K562 (cell line): ENCODE measurements at regions of chr16 and their contacts with region 1.

Region 1: GRCh38 chr16:70576431-70577255 is 53.0 kb downstream of the SF3B3 start:
- DNase-seq: peak in 1 of 4 experiments; percentile 25
- ATAC-seq: peak; percentile 31
- H3K4me3 ChIP-seq: no peak overlapping the region
- H3K27ac ChIP-seq: peak overlapping the region; percentile 22; the same call in 1 of the 3 replicates
- H3K4me1 ChIP-seq: peaks cover 5 to 8% of the 10 kb centered on the region in 2 experiments; a peak in 3 of 5 replicates
- H3K27me3 ChIP-seq: no peaks in the 10 kb centered on the region
- CTCF ChIP-seq: no peak
- EP300 ChIP-seq: no peak
- POLR2A ChIP-seq: peak; percentile 82
- RAD21 ChIP-seq: no peak

Region 2: GRCh38 chr16:70304892-70305448 is 271.7 kb before region 1 on chr16:
- CTCF ChIA-PET with region 1: no interaction called
- POLR2A ChIA-PET with region 1: no interaction called
- in situ Hi-C with region 1: no loop called
- intact Hi-C with region 1: no loop called
- DNase-seq: no peak
- ATAC-seq: no peak
- H3K4me3 ChIP-seq: no peak overlapping the region
- H3K27ac ChIP-seq: no peak overlapping the region
- H3K4me1 ChIP-seq: no peaks in the 10 kb centered on the region
- H3K27me3 ChIP-seq: no peaks in the 10 kb centered on the region
- CTCF ChIP-seq: no peak
- EP300 ChIP-seq: no peak
- POLR2A ChIP-seq: no peak
- RAD21 ChIP-seq: no peak

Region 3: GRCh38 chr16:70534971-70535370 is 41.7 kb before region 1 on chr16:
- CTCF ChIA-PET with region 1: no interaction called
- POLR2A ChIA-PET with region 1: no interaction called
- in situ Hi-C with region 1: no loop called
- intact Hi-C with region 1: loop called (anchors 5 kb)
- DNase-seq: peak; percentile 27 to 32 (median 28)
- ATAC-seq: peak; percentile 59
- H3K4me3 ChIP-seq: no peak overlapping the region
- H3K27ac ChIP-seq: no peak overlapping the region
- H3K4me1 ChIP-seq: peaks cover 0 to 4% of the 10 kb centered on the region in 2 experiments; a peak in 1 of 5 replicates
- H3K27me3 ChIP-seq: no peaks in the 10 kb centered on the region
- CTCF ChIP-seq: no peak
- EP300 ChIP-seq: no peak
- POLR2A ChIP-seq: no peak
- RAD21 ChIP-seq: no peak

Region 4: DNA sequence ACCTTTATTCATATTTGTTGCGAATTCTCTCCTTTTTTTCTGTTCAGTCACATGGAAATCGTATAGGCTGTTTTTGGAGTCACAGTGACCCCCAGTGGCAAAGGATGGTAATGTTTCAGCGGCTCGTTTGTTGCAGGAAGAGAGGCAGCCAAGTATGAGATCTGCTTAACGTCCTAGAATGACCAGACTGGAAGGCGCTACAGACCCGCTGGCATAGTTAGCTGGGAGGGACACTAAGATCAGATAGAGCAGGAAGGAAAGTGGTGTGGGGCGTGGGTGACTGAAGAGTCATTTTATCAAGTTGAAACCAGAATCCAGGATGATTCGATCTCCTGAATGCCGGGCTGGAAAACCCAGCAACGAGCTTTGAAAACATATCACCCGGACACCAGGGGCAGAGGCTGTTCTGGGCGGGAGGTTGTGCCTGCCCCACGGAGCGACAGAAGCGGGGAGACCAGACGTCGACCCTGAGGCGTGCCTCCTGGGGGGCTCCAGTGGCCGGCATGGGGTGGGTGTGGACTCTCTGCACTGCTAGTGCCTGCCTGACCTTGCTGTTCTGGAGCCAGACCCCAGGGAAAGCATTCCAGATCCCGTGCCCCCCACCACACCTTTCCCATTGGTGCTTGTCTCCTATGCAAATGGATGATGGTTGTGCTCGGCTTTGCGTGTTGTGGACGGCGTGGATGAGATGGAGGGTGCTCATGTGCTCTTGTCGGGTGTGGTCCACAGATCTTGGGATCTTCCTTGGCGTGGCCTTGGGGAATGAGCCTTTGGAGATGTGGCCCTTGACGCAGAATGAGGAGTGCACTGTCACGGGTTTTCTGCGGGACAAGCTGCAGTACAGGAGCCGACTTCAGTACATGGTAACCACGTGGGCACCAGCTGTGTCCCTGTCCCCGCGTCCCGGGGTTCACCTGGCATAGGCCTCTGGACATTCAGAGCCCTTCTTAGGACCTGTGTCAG is 77.4 kb after region 1 on chr16:
- CTCF ChIA-PET with region 1: interaction called, 5 read pairs
- POLR2A ChIA-PET with region 1: no interaction called
- in situ Hi-C with region 1: no loop called
- intact Hi-C with region 1: loop called (anchors 5 kb)
- DNase-seq: peak; percentile 75 to 91 (median 81)
- ATAC-seq: peak; percentile 93
- H3K4me3 ChIP-seq: peak overlapping the region; percentile 7
- H3K27ac ChIP-seq: peak overlapping the region; percentile 69; the same call in 2 of the 3 replicates
- H3K4me1 ChIP-seq: peaks cover 6 to 24% of the 10 kb centered on the region in 2 experiments
- H3K27me3 ChIP-seq: peaks cover 0 to 4% of the 10 kb centered on the region in 2 experiments; a peak in 1 of 5 replicates
- CTCF ChIP-seq: peak; percentile 82 to 97 (median 93)
- EP300 ChIP-seq: peak; percentile 36
- POLR2A ChIP-seq: no peak
- RAD21 ChIP-seq: peak; percentile 95 to 96